ENCODE measurements at regions of chr10 and their contacts with region 1.

Region 1: GRCh38 chr10:6678211-6678803 is 98.2 kb upstream of the PRKCQ start:
- DNase-seq: peak; percentile 49 to 68 (median 50)
- ATAC-seq: peak; percentile 81
- H3K4me3 ChIP-seq: no peak overlapping the region
- H3K27ac ChIP-seq: no peak overlapping the region
- H3K4me1 ChIP-seq: no peaks in the 10 kb centered on the region
- H3K27me3 ChIP-seq: peaks cover 3 to 16% of the 10 kb centered on the region in 2 experiments; a peak in 3 of 5 replicates
- CTCF ChIP-seq: peak; percentile 75 to 83 (median 83)
- EP300 ChIP-seq: no peak
- POLR2A ChIP-seq: no peak
- RAD21 ChIP-seq: peak; percentile 63 to 83

Region 2: GRCh38 chr10:6269953-6270867 is 408.1 kb before region 1 on chr10:
- CTCF ChIA-PET with region 1: no interaction called
- POLR2A ChIA-PET with region 1: no interaction called
- in situ Hi-C with region 1: no loop called
- intact Hi-C with region 1: no loop called
- DNase-seq: no peak
- ATAC-seq: peak; percentile 21; the same call in 1 of the 3 replicates
- H3K4me3 ChIP-seq: no peak overlapping the region
- H3K27ac ChIP-seq: no peak overlapping the region
- H3K4me1 ChIP-seq: peaks cover 0 to 2% of the 10 kb centered on the region in 2 experiments; a peak in 2 of 5 replicates
- H3K27me3 ChIP-seq: peaks cover 3 to 6% of the 10 kb centered on the region in 2 experiments; a peak in 1 of 5 replicates
- CTCF ChIP-seq: no peak
- EP300 ChIP-seq: no peak
- POLR2A ChIP-seq: no peak
- RAD21 ChIP-seq: no peak

Region 3: GRCh38 chr10:6416892-6417512 is 261.3 kb before region 1 on chr10:
- CTCF ChIA-PET with region 1: interaction called, 10 read pairs
- POLR2A ChIA-PET with region 1: no interaction called
- in situ Hi-C with region 1: no loop called
- intact Hi-C with region 1: no loop called
- DNase-seq: peak; percentile 44 to 69 (median 52)
- ATAC-seq: peak; percentile 88
- H3K4me3 ChIP-seq: no peak overlapping the region
- H3K27ac ChIP-seq: no peak overlapping the region
- H3K4me1 ChIP-seq: no peaks in the 10 kb centered on the region
- H3K27me3 ChIP-seq: peaks cover 2 to 13% of the 10 kb centered on the region in 2 experiments; a peak in 1 of 5 replicates
- CTCF ChIP-seq: peak; percentile 54 to 91 (median 67); a peak in 5 of 6 replicates
- EP300 ChIP-seq: no peak
- POLR2A ChIP-seq: no peak
- RAD21 ChIP-seq: peak; percentile 94 to 98

Region 4: DNA sequence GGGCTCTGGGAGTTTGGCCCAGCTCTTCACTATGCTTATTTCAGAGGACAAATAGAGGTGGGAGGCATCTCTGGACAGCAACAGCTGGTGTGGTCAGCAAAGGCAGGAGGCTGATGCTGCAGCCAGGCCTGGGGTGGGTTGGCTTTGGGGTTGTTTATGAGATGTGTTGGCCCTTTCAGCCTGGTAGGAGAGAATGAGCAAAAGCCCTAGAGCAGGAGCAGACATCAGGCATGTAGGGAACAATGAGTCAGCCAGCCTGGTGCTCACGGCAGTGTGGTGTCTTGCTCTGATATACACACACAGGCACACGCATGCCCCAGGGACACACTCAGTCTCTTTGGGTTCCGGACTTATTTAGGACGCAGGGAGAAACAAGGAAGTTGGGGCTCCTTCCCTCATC is 255.3 kb before region 1 on chr10:
- CTCF ChIA-PET with region 1: no interaction called
- POLR2A ChIA-PET with region 1: no interaction called
- in situ Hi-C with region 1: loop called (anchors 5 kb)
- intact Hi-C with region 1: no loop called
- DNase-seq: no peak
- ATAC-seq: peak; percentile 46; the same call in 1 of the 3 replicates
- H3K4me3 ChIP-seq: no peak overlapping the region
- H3K27ac ChIP-seq: no peak overlapping the region
- H3K4me1 ChIP-seq: no peaks in the 10 kb centered on the region
- H3K27me3 ChIP-seq: 0 out of 5 replicates have a peak, but pooled peaks cover 0 to 2% of the 10 kb centered on the region in 2 experiments
- CTCF ChIP-seq: no peak
- EP300 ChIP-seq: no peak
- POLR2A ChIP-seq: no peak
- RAD21 ChIP-seq: no peak

Region 5: GRCh38 chr10:7417103-7417623 is 738.9 kb after region 1 on chr10:
- CTCF ChIA-PET with region 1: no interaction called
- POLR2A ChIA-PET with region 1: no interaction called
- in situ Hi-C with region 1: loop called (anchors 25 kb)
- intact Hi-C with region 1: loop called (anchors 5 kb)
- DNase-seq: peak in 1 of 4 experiments; percentile 39
- ATAC-seq: no peak
- H3K4me3 ChIP-seq: no peak overlapping the region
- H3K27ac ChIP-seq: no peak overlapping the region
- H3K4me1 ChIP-seq: no peaks in the 10 kb centered on the region
- H3K27me3 ChIP-seq: peaks cover 7% of the 10 kb centered on the region in 2 experiments; a peak in 3 of 5 replicates
- CTCF ChIP-seq: peak in 2 of 3 experiments; percentile 27 to 72; a peak in 4 of 6 replicates
- EP300 ChIP-seq: no peak
- POLR2A ChIP-seq: no peak
- RAD21 ChIP-seq: peak; percentile 82 to 84